Activated T-helper 1 cell treated with anti-CD3 and anti-CD28 coated beads, Interleukin-12 subunit alpha, Interleukin-12 subunit beta, Interleukin-2, Interleukin-4 antibody, amounts not matched to agents 30 ng/mL and 10 ng/mL and 1 ng/mL, durations not matched to agents 14 hours and 24 hours and 36 hours (primary cell): ENCODE measurements at regions of chr15 and their contacts with region 1.

Region 1: DNA sequence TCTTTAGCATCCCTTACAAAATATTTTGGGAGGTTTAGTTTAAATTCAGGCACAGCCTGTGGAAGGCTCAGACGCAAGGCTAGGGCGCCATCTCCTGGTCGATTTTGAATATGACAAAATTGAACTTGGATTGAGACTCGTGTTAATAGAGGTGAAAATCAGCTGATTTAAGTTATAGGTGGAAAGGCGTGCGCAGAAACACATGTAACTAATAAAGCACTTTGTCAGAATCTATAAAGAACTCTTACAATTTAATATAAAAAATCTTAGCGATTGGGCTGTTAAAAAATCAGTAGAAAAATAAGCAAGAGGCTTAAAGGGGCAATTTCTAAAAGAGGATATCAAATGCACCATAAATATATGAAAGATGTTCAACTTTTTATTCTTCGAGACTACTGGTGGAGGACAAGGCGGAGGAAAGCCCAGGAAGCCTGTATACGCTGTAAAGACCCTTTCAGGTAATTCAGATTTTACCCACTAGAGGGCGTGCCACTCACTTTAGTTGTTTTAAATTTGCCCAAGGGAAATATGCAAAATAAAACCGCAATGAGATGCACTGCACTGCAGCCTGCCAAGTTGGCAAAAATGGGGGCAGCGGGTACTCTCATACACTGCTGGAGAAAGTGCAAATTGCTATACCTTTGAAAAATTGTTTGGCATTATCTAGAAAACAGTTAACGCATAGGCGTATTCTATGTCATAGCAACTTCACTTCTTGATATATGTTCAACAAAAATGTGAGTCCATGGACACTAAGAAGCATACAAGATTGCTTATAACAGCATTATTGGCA is 64.7 kb downstream of the SLC30A4 start:
- DNase-seq: peak; percentile 72
- H3K4me3 Mint-ChIP-seq: peak overlapping the region; percentile 76
- H3K27ac Mint-ChIP-seq: peak overlapping the region; percentile 91
- H3K4me1 Mint-ChIP-seq: peaks cover 49% of the 10 kb centered on the region
- H3K27me3 Mint-ChIP-seq: no peaks in the 10 kb centered on the region

Region 2: DNA sequence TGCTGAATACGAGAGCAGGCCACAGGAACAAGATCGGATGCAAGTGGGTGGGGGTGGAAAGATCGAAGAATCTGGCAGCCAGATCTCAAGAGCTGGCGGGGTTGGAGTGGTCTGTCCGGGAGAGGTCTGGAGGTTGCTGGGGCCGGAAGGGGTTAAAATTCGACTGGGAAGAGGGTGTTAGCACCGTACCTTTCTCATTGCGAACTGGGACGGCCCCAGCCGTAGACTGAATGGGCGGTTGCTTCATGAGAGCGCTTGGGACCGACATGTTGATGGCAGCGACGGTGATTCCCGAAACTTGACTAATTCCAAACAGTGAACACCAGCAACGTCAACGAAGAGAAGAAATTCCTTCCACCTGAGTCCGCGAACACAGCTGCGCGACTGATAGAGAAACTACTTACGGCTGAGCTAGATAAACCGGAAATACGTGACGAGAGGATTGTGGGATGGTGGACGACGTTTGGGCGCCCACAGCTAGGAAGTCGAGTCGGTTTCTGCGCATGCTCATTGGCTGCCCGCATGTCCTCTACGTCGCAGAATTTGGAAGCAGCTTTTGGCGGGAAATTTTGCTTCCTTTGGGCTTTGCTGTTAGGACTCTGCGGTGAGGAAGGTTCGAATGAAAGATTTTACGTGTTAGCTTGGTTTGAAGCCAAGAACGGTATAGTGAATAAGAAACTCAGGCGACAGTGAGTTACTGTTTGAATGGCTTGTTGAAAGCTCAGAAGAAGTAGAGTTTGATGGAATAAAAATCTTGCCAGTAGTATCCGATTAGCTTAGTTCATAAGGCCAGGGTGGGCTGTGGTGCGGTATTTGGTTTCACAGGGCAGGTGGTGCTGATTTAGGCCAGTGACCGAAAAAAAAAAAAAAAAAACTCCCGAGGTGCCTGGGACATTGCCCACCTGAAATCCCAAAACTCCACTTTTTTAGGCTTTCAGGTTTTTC is 1633.3 kb before region 1 on chr15 and contains the start of gene MFAP1:
- intact Hi-C with region 1: loop called (anchors 10 kb)
- DNase-seq: peak; percentile 91
- H3K4me3 Mint-ChIP-seq: peak within 1 kb of the TSS; percentile 97
- H3K27ac Mint-ChIP-seq: peak within 1 kb of the TSS; percentile 97
- H3K4me1 Mint-ChIP-seq: peaks cover 46% of the 10 kb centered on the region
- H3K27me3 Mint-ChIP-seq: no peaks in the 10 kb centered on the region
- total RNA-seq, gene MFAP1: 46.4 and 46.6 TPM in 2 replicates

Region 3: DNA sequence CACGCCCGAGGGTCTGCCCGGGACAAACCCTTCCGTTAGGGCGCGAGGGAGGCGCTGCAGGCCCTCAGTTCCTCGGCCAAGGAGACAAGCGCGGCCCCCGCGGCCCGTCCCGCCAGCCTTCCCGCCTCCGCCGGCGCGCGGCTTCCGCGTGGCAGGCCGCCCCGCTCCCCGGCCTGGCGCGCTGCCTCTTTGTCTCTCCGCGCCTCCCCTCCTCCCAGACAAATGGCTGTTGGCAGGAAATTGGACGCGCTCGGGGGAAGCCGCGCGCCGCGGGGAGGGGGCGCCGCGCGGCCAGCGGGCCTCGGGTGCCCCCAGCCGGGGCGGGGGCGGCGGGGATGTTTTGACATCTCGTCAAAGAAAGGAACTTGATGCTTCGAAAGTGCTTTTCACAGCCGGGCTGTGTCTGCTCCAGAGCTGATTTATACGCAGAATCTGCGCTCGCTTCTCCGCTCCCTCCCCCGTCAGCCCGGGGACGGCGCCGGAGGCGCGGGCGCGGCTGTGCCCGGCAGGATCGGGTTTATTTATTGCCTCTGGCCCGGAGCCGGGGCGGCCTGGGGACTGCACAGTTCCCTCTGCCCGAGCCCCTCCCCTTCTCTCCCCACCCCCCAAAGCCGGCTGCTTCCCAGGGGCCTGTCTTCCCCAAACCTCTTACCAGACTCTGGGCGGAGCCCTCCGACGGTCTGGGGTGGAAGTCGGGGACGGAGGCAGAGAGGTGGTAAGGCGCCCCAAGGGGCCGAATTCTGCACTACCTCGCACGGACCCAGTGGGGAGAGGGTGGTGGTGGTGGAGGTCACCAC is 290.8 kb before region 1 on chr15:
- intact Hi-C with region 1: loop called (anchors 1 kb)
- DNase-seq: peak; percentile 77
- H3K4me3 Mint-ChIP-seq: peak overlapping the region; percentile 75
- H3K27ac Mint-ChIP-seq: peak overlapping the region; percentile 81
- H3K4me1 Mint-ChIP-seq: peaks cover 21% of the 10 kb centered on the region
- H3K27me3 Mint-ChIP-seq: no peaks in the 10 kb centered on the region

Region 4: DNA sequence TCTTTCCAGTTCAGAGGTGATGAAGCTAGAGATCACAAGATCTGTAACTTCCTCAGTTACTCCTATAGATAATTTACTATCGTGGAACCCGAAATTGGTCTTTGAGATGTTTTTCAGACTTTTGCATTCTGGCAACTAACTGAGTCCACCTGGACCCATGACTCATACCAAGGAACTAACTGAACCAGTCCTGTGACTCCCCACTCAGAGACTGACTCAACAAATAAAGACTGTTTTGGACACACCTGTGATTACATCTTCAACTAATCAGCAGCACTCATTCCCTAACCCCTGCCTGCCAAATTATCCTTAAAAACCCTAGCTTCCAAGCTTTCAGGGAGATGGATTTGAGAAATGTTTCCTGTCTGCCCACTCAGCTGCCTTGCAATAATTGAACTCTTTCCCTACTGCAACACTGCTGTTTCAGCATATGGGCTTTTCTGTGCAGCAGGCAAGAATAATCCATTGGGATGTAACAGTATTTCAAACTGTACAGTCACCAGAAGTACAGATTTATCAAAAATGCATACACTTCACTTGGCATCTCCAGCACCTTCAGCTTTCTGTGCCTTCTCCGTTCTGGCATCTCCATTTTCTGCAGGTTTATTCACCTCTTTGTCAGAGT is 137.1 kb before region 1 on chr15:
- intact Hi-C with region 1: no loop called
- DNase-seq: no peak
- H3K4me3 Mint-ChIP-seq: no peak overlapping the region
- H3K27ac Mint-ChIP-seq: no peak overlapping the region
- H3K4me1 Mint-ChIP-seq: no peaks in the 10 kb centered on the region
- H3K27me3 Mint-ChIP-seq: peaks cover 2% of the 10 kb centered on the region

Region 5: GRCh38 chr15:45424429-45424828 is 33.4 kb before region 1 on chr15:
- intact Hi-C with region 1: loop called (anchors 5 kb)
- DNase-seq: no peak
- H3K4me3 Mint-ChIP-seq: no peak overlapping the region
- H3K27ac Mint-ChIP-seq: no peak overlapping the region
- H3K4me1 Mint-ChIP-seq: peaks cover 4% of the 10 kb centered on the region
- H3K27me3 Mint-ChIP-seq: peaks cover 3% of the 10 kb centered on the region

Region 6: GRCh38 chr15:45522328-45523160 is 64.7 kb after region 1 on chr15 and contains the start of gene SLC30A4:
- intact Hi-C with region 1: loop called (anchors 1 kb)
- DNase-seq: peak; percentile 68
- H3K4me3 Mint-ChIP-seq: peak within 1 kb of the TSS; percentile 88
- H3K27ac Mint-ChIP-seq: peak within 1 kb of the TSS; percentile 66
- H3K4me1 Mint-ChIP-seq: peaks cover 22% of the 10 kb centered on the region
- H3K27me3 Mint-ChIP-seq: peaks cover 25% of the 10 kb centered on the region
- total RNA-seq, gene SLC30A4: 1.6 and 2.1 TPM in 2 replicates

Region 7: DNA sequence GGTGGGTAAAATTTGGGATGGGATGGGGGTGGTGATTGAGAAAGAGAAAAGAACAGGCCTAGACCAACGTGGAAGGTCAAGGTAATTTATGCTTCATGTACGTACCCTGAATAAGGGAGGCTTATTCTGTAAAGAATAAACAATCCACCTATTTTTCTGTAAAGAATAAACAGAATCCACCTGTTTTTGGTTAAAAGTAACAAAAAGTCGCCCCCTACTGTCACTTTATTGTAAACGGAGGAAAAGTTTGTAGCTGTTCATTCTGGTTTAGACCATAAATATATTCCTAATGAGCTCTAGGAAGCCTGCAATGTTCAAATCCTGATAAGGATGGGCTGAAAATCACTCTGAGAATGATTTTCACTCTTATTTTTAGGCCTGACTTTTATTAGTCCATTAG is 153.5 kb after region 1 on chr15:
- intact Hi-C with region 1: loop called (anchors 1 kb)
- DNase-seq: no peak
- H3K4me3 Mint-ChIP-seq: no peak overlapping the region
- H3K27ac Mint-ChIP-seq: no peak overlapping the region
- H3K4me1 Mint-ChIP-seq: peaks cover 10% of the 10 kb centered on the region
- H3K27me3 Mint-ChIP-seq: no peaks in the 10 kb centered on the region

Region 8: GRCh38 chr15:45705510-45706473 is 248.0 kb after region 1 on chr15:
- intact Hi-C with region 1: loop called (anchors 10 kb)
- DNase-seq: peak; percentile 51
- H3K4me3 Mint-ChIP-seq: peak overlapping the region; percentile 86
- H3K27ac Mint-ChIP-seq: peak overlapping the region; percentile 9
- H3K4me1 Mint-ChIP-seq: peaks cover 16% of the 10 kb centered on the region
- H3K27me3 Mint-ChIP-seq: peaks cover 21% of the 10 kb centered on the region